Activated naive CD4-positive, alpha-beta T cell treated with anti-CD3 and anti-CD28 coated beads, Interleukin-2, amount 10 ng/mL, durations not matched to agents 7 days and 5 days (primary cell): ENCODE measurements at regions of chr2 and their contacts with region 1.

Region 1: GRCh38 chr2:38554973-38555595 is 47.6 kb downstream of the HNRNPLL start:
- DNase-seq: no peak
- H3K4me3 Mint-ChIP-seq: no peak overlapping the region
- H3K27ac Mint-ChIP-seq: no peak overlapping the region
- H3K4me1 Mint-ChIP-seq: peaks cover 4% of the 10 kb centered on the region
- H3K27me3 Mint-ChIP-seq: no peaks in the 10 kb centered on the region

Region 2: DNA sequence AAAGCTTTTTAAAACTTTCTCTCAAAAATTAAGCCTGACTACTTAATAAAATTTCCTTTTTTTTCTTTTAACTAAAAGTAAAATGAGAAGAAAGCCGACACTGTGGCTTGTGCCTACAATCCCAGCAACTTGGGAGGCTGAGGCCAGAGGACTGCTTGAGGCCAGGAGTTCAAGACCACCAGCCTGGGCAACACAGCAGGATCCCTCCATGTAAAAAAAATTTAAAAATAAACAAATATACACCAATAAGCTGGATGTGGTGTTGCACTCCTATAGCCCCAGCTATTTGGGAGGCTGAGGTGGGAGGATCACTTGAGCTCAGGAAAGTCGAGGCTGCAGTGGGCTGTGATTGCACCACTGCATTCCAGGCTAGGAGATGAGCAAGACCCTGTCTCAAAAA is 10.2 kb after region 1 on chr2:
- CTCF ChIA-PET with region 1: interaction called, 10 read pairs
- DNase-seq: no peak
- H3K4me3 Mint-ChIP-seq: no peak overlapping the region
- H3K27ac Mint-ChIP-seq: no peak overlapping the region
- H3K4me1 Mint-ChIP-seq: no peaks in the 10 kb centered on the region
- H3K27me3 Mint-ChIP-seq: no peaks in the 10 kb centered on the region